Activated CD4-positive, alpha-beta T cell treated with anti-CD3 and anti-CD28 coated beads for 36 hours (primary cell): ENCODE measurements at regions of chr14 and their contacts with region 1.

Region 1: GRCh38 chr14:40989260-40989659 is 617.4 kb upstream of the LRFN5 start:
- DNase-seq: no peak
- ATAC-seq: no peak
- H3K4me3 Mint-ChIP-seq: no peak overlapping the region
- H3K27ac Mint-ChIP-seq: no peak overlapping the region
- H3K4me1 Mint-ChIP-seq: no peaks in the 10 kb centered on the region
- H3K27me3 Mint-ChIP-seq: no peaks in the 10 kb centered on the region

Region 2: DNA sequence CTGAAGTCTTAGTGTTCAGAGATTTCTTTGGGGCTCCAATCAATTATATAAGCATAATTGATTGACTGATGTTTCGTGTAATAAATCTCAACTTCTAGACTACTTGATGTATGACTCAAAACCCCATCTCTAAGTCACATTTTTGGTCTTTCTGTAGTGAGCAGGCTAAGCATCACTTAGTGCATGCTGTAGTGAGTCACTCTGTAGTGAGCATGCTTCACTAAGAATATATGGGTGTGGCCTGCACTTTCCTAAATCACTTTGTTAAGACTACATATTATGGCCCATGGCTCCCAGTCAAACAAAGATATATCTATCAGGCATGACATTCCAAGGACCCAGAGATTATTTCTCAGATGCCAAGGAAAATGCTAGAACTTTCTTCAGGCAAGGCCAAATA is 292.0 kb before region 1 on chr14:
- CTCF ChIA-PET with region 1: no interaction called
- POLR2A ChIA-PET with region 1: no interaction called
- intact Hi-C with region 1: no loop called
- DNase-seq: no peak
- ATAC-seq: no peak
- H3K4me3 Mint-ChIP-seq: no peak overlapping the region
- H3K27ac Mint-ChIP-seq: no peak overlapping the region
- H3K4me1 Mint-ChIP-seq: no peaks in the 10 kb centered on the region
- H3K27me3 Mint-ChIP-seq: no peaks in the 10 kb centered on the region

Region 3: DNA sequence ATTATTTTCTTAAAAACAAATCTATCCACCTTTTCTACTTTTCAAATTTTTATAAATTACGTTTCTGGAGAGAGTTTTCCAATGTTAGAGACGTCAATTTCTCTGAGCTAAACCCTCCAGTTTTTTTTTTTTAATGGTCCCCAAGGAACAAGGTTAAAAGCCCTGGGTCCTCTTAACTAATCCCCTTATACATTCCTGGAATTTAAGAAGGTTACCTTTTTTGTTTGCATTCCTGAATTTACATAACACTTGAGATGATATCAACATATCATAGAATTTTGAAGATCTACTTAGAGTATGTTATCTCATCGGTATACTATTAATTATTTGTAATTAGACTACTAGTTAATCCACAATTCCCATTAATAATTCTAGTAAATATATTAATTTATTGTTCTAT is 44.7 kb before region 1 on chr14:
- CTCF ChIA-PET with region 1: no interaction called
- POLR2A ChIA-PET with region 1: no interaction called
- intact Hi-C with region 1: loop called in 1 of 2 experiments (anchors 2 kb)
- DNase-seq: no peak
- ATAC-seq: no peak
- H3K4me3 Mint-ChIP-seq: no peak overlapping the region
- H3K27ac Mint-ChIP-seq: no peak overlapping the region
- H3K4me1 Mint-ChIP-seq: no peaks in the 10 kb centered on the region
- H3K27me3 Mint-ChIP-seq: no peaks in the 10 kb centered on the region